Natural killer cell (primary cell): ENCODE measurements at regions of chr11 and their contacts with region 1.

Region 1: GRCh38 chr11:83193315-83194280 is at the start of gene ANKRD42:
- DNase-seq: peak; percentile 79 to 96
- ATAC-seq: peak; percentile 62 to 81 (median 72)
- H3K4me3 ChIP-seq: peak within 1 kb of the TSS; percentile 83
- H3K4me3 Mint-ChIP-seq: peak within 1 kb of the TSS; percentile 100
- H3K27ac ChIP-seq: peak within 1 kb of the TSS; percentile 97
- H3K27ac Mint-ChIP-seq: peak within 1 kb of the TSS; percentile 98 to 100
- H3K4me1 ChIP-seq: peaks cover 11% of the 10 kb centered on the region
- H3K4me1 Mint-ChIP-seq: peaks cover 50 to 51% of the 10 kb centered on the region in 2 donors
- H3K27me3 ChIP-seq: no peaks in the 10 kb centered on the region
- H3K27me3 Mint-ChIP-seq: no peaks in the 10 kb centered on the region
- CTCF ChIP-seq: no peak
- total RNA-seq, gene ANKRD42: 10.4 to 13.3 (median 11.6) TPM

Region 2: GRCh38 chr11:82900277-82901164 is 293.1 kb before region 1 on chr11 and contains the start of gene PRCP:
- intact Hi-C with region 1: loop called (anchors 2 kb)
- DNase-seq: peak; percentile 91 to 95
- ATAC-seq: peak; percentile 75 to 90 (median 79)
- H3K4me3 ChIP-seq: peak within 1 kb of the TSS; percentile 94
- H3K4me3 Mint-ChIP-seq: peak within 1 kb of the TSS; percentile 98
- H3K27ac ChIP-seq: peak within 1 kb of the TSS; percentile 99
- H3K27ac Mint-ChIP-seq: peak within 1 kb of the TSS; percentile 97 to 99
- H3K4me1 ChIP-seq: peaks cover 32% of the 10 kb centered on the region
- H3K4me1 Mint-ChIP-seq: peaks cover 50 to 59% of the 10 kb centered on the region in 2 donors
- H3K27me3 ChIP-seq: no peaks in the 10 kb centered on the region
- H3K27me3 Mint-ChIP-seq: no peaks in the 10 kb centered on the region
- CTCF ChIP-seq: no peak
- total RNA-seq, gene PRCP: 28.1 to 30.0 (median 30.0) TPM

Region 3: DNA sequence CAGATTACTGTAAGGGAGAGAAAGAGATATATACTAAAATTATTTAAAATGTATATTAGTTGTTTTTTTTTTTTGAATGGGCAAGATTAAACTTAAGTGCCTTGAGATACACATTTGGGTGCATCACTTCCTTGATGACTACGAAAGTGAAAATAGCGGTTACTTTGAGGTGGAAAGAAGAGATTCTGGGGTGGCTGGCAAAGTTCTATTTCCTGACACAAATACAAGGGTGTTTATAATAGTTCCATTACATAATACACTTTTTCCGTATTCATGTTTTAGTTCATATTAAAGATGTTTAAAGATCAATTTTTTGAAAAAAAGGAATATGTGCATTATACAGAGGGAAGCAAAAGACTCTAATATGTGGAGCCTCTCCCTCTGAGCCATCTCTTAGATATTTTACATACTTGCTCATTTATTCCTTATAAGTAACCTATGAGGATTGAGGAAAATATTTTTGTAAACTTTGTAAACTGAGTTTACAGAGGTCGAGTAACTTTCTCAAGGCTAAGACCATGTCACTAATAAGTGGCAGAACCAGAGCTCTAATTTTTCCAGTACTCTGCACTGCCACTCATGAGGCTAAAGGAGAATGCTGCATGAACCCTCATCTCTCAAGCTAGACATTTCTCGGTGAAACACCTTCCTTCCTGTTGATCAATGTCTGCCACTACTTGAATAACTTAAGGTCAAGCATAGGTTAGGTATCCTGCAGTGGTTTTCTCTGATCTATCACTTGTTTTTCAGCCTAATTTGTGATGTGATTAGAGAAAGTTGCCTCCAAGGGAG is 233.4 kb before region 1 on chr11:
- intact Hi-C with region 1: loop called (anchors 1 kb)
- DNase-seq: peak in 1 of 2 donors; percentile 85
- ATAC-seq: peak; percentile 76 to 86 (median 86)
- H3K4me3 ChIP-seq: peak overlapping the region; percentile 2
- H3K4me3 Mint-ChIP-seq: peak overlapping the region; percentile 83
- H3K27ac ChIP-seq: peak overlapping the region; percentile 91
- H3K27ac Mint-ChIP-seq: peak overlapping the region; percentile 92 to 97
- H3K4me1 ChIP-seq: peaks cover 41% of the 10 kb centered on the region
- H3K4me1 Mint-ChIP-seq: peaks cover 62 to 71% of the 10 kb centered on the region in 2 donors
- H3K27me3 ChIP-seq: no peaks in the 10 kb centered on the region
- H3K27me3 Mint-ChIP-seq: no peaks in the 10 kb centered on the region
- CTCF ChIP-seq: no peak

Region 4: GRCh38 chr11:82996966-82997606 is 196.5 kb before region 1 on chr11:
- intact Hi-C with region 1: no loop called
- DNase-seq: no peak
- ATAC-seq: no peak
- H3K4me3 ChIP-seq: no peak overlapping the region
- H3K4me3 Mint-ChIP-seq: no peak overlapping the region
- H3K27ac ChIP-seq: no peak overlapping the region
- H3K27ac Mint-ChIP-seq: no peak overlapping the region
- H3K4me1 ChIP-seq: no peaks in the 10 kb centered on the region
- H3K4me1 Mint-ChIP-seq: peaks cover 11 to 16% of the 10 kb centered on the region in 2 donors
- H3K27me3 ChIP-seq: no peaks in the 10 kb centered on the region
- H3K27me3 Mint-ChIP-seq: no peaks in the 10 kb centered on the region
- CTCF ChIP-seq: no peak

Region 5: DNA sequence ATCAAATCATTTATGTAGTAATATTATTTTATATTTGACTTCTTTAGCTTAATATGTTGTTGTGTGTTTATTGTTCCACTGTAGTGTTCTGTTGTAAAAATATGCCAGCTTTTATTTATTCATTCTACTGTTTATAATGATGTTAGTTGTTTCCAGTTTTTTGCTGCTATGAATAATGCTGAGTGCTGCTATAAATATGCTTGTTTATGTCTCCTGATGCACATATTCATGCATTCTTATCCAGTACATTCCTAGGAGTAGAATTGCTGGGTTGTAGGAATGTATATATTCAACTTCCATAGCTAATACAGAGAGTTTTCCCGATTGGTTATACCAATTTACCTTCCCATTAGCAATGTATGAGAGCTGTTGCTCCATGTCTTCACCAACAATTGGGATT is 88.4 kb before region 1 on chr11:
- intact Hi-C with region 1: no loop called
- DNase-seq: no peak
- ATAC-seq: no peak
- H3K4me3 ChIP-seq: no peak overlapping the region
- H3K4me3 Mint-ChIP-seq: no peak overlapping the region
- H3K27ac ChIP-seq: no peak overlapping the region
- H3K27ac Mint-ChIP-seq: no peak overlapping the region
- H3K4me1 ChIP-seq: no peaks in the 10 kb centered on the region
- H3K4me1 Mint-ChIP-seq: no peaks in the 10 kb centered on the region
- H3K27me3 ChIP-seq: no peaks in the 10 kb centered on the region
- H3K27me3 Mint-ChIP-seq: peaks cover 0 to 20% of the 10 kb centered on the region in 2 donors
- CTCF ChIP-seq: no peak

Region 6: DNA sequence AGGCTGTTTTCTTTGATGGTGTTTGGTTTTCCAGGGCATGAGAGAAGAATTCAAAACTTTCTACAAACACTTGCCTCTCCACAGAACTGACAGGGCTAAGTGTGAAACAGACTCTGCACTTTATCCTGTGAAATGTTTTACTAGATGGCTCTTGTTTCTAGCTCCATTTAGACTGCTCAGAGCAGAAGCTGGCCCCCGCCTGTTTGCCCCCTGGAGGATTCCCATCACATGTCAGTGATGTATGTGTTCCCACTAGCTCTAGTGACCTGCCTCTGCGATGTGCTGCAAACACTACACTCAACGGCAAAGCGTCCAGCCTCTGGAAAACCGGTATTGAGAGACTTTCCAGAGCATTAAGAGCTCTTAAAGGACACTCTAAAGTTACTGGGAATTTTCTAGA is 78.0 kb before region 1 on chr11:
- intact Hi-C with region 1: loop called (anchors 1 kb)
- DNase-seq: peak in 1 of 2 donors; percentile 9
- ATAC-seq: peak in 1 of 3 donors; percentile 26
- H3K4me3 ChIP-seq: no peak overlapping the region
- H3K4me3 Mint-ChIP-seq: peak overlapping the region; percentile 76
- H3K27ac ChIP-seq: no peak overlapping the region
- H3K27ac Mint-ChIP-seq: peak overlapping the region; percentile 66 to 83
- H3K4me1 ChIP-seq: peaks cover 27% of the 10 kb centered on the region
- H3K4me1 Mint-ChIP-seq: peaks cover 30 to 31% of the 10 kb centered on the region in 2 donors
- H3K27me3 ChIP-seq: no peaks in the 10 kb centered on the region
- H3K27me3 Mint-ChIP-seq: no peaks in the 10 kb centered on the region
- CTCF ChIP-seq: no peak

Region 7: GRCh38 chr11:83156150-83156995 is 37.2 kb before region 1 on chr11:
- intact Hi-C with region 1: loop called (anchors 1 kb)
- DNase-seq: peak; percentile 93 to 100
- ATAC-seq: peak; percentile 83 to 95 (median 87)
- H3K4me3 ChIP-seq: peak overlapping the region; percentile 68
- H3K4me3 Mint-ChIP-seq: peak overlapping the region; percentile 95
- H3K27ac ChIP-seq: peak overlapping the region; percentile 91
- H3K27ac Mint-ChIP-seq: peak overlapping the region; percentile 99 to 100
- H3K4me1 ChIP-seq: peaks cover 15% of the 10 kb centered on the region
- H3K4me1 Mint-ChIP-seq: peaks cover 30 to 33% of the 10 kb centered on the region in 2 donors
- H3K27me3 ChIP-seq: no peaks in the 10 kb centered on the region
- H3K27me3 Mint-ChIP-seq: no peaks in the 10 kb centered on the region
- CTCF ChIP-seq: no peak

Region 8: DNA sequence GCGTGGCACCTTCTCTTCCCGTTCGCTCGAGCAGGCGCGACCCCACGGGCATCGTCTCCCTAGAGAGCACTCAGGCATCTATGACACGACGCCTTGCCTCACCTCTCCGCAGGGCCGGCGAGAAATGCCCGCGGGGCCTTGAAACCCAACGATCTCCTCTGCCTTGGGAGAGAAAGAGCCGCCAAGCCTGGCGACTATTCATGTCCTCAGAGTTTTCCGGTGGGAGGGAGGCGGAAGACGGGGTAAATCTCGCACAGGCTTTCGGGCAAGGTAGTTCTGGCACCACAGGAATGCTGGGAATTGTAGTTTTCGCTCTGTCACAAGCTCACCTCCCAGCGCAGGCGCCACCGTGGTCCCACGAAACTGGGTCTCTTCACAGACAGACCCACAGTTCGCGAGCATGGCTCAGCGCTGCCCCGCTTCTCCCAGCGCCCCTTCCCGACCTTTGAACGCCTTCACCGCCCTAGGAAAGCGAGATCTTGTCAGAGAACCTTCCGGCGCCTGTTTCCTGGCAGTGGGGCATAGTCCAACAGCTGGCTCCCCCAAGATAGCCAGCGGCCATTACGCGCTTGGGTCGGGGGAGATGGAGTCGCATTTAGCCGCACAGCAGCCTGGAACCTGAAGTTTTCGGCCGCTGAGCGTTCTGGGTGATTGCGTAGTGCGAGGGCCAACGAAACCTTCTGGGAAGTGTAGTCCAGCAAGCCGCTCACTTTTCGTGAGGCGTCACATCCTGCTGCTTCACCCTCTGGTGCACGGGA is 92.4 kb after region 1 on chr11 and contains the start of gene CCDC90B:
- intact Hi-C with region 1: loop called (anchors 2 kb)
- DNase-seq: peak; percentile 90 to 98
- ATAC-seq: peak; percentile 89 to 96 (median 89)
- H3K4me3 ChIP-seq: peak within 1 kb of the TSS; percentile 81
- H3K4me3 Mint-ChIP-seq: peak within 1 kb of the TSS; percentile 96
- H3K27ac ChIP-seq: peak within 1 kb of the TSS; percentile 97
- H3K27ac Mint-ChIP-seq: peak within 1 kb of the TSS; percentile 99 to 100
- H3K4me1 ChIP-seq: peaks cover 4% of the 10 kb centered on the region
- H3K4me1 Mint-ChIP-seq: peaks cover 21 to 26% of the 10 kb centered on the region in 2 donors
- H3K27me3 ChIP-seq: no peaks in the 10 kb centered on the region
- H3K27me3 Mint-ChIP-seq: peaks cover 0 to 8% of the 10 kb centered on the region in 2 donors
- CTCF ChIP-seq: no peak
- total RNA-seq, gene CCDC90B: 27.3 to 30.2 (median 29.5) TPM

Region 9: GRCh38 chr11:83566948-83567347 is 373.4 kb after region 1 on chr11:
- intact Hi-C with region 1: no loop called
- DNase-seq: no peak
- ATAC-seq: no peak
- H3K4me3 ChIP-seq: no peak overlapping the region
- H3K4me3 Mint-ChIP-seq: no peak overlapping the region
- H3K27ac ChIP-seq: no peak overlapping the region
- H3K27ac Mint-ChIP-seq: no peak overlapping the region
- H3K4me1 ChIP-seq: no peaks in the 10 kb centered on the region
- H3K4me1 Mint-ChIP-seq: no peaks in the 10 kb centered on the region
- H3K27me3 ChIP-seq: no peaks in the 10 kb centered on the region
- H3K27me3 Mint-ChIP-seq: peaks cover 0 to 3% of the 10 kb centered on the region in 2 donors
- CTCF ChIP-seq: no peak